Endothelial cell of umbilical vein (primary cell): ENCODE measurements at regions of chr16 and their contacts with region 1.

Region 1: DNA sequence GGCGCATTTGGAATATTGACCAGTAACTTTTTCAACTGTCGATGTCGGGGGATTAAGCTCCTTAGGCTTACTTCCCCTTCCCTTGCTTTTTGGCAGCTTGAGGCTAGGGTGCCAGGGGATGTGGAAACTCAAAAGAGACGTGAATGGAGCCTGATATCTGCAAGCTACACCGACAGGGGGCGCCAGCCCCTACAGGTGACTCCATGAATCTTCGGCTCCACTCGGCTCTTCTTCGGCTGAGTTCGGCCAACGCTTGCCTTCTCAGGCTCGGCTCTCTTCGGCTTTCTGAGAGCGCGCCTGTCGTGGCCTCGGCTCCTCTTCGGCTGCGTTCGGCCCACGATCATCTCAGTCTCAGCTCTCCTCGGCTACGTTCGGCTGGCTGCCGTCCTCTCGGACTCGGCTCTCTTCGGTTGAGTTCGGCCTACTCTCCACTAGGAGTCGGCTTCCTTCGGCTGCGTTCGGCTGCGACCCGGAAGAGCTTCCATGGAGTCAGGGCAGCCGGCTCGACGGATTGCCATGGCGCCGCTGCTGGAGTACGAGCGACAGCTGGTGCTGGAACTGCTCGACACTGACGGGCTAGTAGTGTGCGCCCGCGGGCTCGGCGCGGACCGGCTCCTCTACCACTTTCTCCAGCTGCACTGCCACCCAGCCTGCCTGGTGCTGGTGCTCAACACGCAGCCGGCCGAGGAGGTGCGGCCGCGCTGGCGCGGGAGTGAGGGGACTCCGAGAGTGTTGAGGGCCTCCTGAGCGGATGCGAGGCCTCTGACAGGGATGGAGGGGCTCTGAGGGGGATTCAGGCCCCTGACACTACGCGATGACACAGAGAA is at the start of gene ERCC4:
- DNase-seq: peak; percentile 100
- H3K4me3 ChIP-seq: peak within 1 kb of the TSS; percentile 66 to 83 (median 67)
- H3K27ac ChIP-seq: peak within 1 kb of the TSS; percentile 37
- H3K4me1 ChIP-seq: peaks cover 10% of the 10 kb centered on the region
- H3K27me3 ChIP-seq: peaks cover 3% of the 10 kb centered on the region in 2 experiments
- CTCF ChIP-seq: peak; percentile 97
- POLR2A ChIP-seq: peak; percentile 83
- total RNA-seq, gene ERCC4: 15.1 and 17.1 TPM in 2 replicates

Region 2: GRCh38 chr16:13866073-13866472 is 53.8 kb before region 1 on chr16:
- CTCF ChIA-PET with region 1: interaction called, 24 read pairs
- POLR2A ChIA-PET with region 1: no interaction called
- dilution Hi-C with region 1: no loop called
- intact Hi-C with region 1: loop called (anchors 1 kb)
- DNase-seq: peak; percentile 73
- H3K4me3 ChIP-seq: no peak overlapping the region
- H3K27ac ChIP-seq: no peak overlapping the region
- H3K4me1 ChIP-seq: no peaks in the 10 kb centered on the region
- H3K27me3 ChIP-seq: peaks cover 0 to 2% of the 10 kb centered on the region in 2 experiments
- CTCF ChIP-seq: peak; percentile 65 to 81
- POLR2A ChIP-seq: no peak

Region 3: GRCh38 chr16:14070877-14071575 is 151.1 kb after region 1 on chr16 and contains the start of gene MRTFB:
- CTCF ChIA-PET with region 1: interaction called, 18 read pairs
- POLR2A ChIA-PET with region 1: no interaction called
- dilution Hi-C with region 1: no loop called
- intact Hi-C with region 1: loop called (anchors 5 kb)
- DNase-seq: peak; percentile 70
- H3K4me3 ChIP-seq: peak within 1 kb of the TSS; percentile 74 to 96 (median 82)
- H3K27ac ChIP-seq: peak within 1 kb of the TSS; percentile 68
- H3K4me1 ChIP-seq: peaks cover 11% of the 10 kb centered on the region
- H3K27me3 ChIP-seq: no peaks in the 10 kb centered on the region
- CTCF ChIP-seq: no peak
- POLR2A ChIP-seq: no peak
- total RNA-seq, gene MRTFB: 49.5 and 50.2 TPM in 2 replicates

Region 4: GRCh38 chr16:14196539-14196938 is 276.6 kb after region 1 on chr16:
- CTCF ChIA-PET with region 1: interaction called, 20 read pairs
- POLR2A ChIA-PET with region 1: no interaction called
- dilution Hi-C with region 1: no loop called
- intact Hi-C with region 1: no loop called
- DNase-seq: peak; percentile 73
- H3K4me3 ChIP-seq: no peak overlapping the region
- H3K27ac ChIP-seq: peak overlapping the region; percentile 48
- H3K4me1 ChIP-seq: peaks cover 18% of the 10 kb centered on the region
- H3K27me3 ChIP-seq: no peaks in the 10 kb centered on the region
- CTCF ChIP-seq: no peak
- POLR2A ChIP-seq: no peak

Region 5: DNA sequence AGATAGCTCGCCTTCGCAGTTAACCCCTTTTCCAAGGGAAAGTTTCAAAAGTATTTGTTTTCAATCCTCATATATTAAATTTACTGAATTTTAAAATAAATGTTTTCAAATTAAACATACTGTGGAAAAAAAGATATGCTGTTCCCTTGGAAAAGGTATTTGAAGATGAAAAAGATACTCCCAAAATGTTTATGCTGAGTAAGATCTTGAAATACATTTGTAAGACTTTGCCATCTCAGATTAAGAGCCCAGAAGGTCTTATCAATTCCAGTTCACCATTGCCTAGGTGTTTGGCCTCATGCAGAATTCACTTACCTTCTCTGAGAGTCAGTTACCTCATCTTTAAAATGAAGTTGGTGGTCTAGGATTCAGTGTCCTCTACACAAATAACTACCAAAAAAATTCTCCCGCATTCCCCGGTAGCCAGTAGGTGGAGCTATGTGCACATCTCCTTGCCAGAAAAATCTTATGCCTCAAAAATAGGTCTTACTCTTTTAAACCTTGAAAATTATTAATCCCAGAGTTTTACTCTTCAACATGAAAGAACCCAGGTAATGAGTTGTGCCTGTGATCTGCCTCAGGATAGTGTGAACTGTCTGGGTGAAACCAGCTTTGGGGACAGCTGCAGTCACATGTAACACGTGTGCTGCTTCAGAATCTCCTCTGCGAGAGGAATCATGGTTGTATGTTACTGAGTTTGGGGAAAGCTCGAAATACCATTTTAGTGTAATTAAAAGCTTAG is 329.6 kb after region 1 on chr16:
- CTCF ChIA-PET with region 1: interaction called, 47 read pairs
- POLR2A ChIA-PET with region 1: no interaction called
- dilution Hi-C with region 1: loop called (anchors 25 kb)
- intact Hi-C with region 1: loop called (anchors 1 kb)
- DNase-seq: peak; percentile 62
- H3K4me3 ChIP-seq: no peak overlapping the region
- H3K27ac ChIP-seq: no peak overlapping the region
- H3K4me1 ChIP-seq: no peaks in the 10 kb centered on the region
- H3K27me3 ChIP-seq: no peaks in the 10 kb centered on the region
- CTCF ChIP-seq: peak; percentile 68 to 77
- POLR2A ChIP-seq: no peak

Region 6: DNA sequence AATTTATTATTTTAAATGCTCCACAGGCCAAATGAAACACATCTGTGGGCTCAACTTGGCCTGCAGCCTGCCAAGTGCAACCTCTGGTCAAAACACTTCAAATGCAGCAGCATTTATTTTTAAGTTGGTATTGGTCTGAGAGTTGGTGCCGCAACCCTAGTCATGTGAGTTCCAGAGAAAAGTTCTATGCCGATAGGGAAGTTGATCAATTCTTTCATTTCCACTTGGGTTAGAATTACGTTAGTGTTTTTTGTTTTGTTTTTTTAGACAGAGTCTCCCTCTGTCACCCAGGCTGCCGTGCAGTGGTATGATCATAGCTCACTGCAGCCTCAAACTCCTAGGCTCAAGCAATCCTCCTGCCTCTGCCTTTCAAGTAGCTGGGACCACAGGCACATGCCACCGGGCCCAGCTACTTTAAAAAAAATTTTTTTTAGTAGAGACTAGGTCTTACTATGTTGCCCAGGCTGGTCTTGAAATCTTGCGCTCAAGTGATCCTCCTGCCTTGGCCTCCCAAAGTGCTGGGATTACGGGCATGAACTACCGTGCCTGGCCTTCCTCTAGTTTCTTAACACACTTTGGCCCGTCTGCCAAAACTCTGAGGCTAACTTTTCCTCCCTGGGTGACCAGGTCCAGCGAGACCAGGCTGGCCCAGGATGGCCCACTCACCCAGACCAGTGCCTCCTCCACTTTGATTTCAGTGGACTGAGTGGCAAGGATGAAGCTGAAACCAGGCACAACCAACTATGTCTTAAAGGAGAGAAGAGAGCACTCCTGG is 372.3 kb after region 1 on chr16:
- CTCF ChIA-PET with region 1: interaction called, 49 read pairs
- POLR2A ChIA-PET with region 1: no interaction called
- dilution Hi-C with region 1: no loop called
- intact Hi-C with region 1: no loop called
- DNase-seq: no peak
- H3K4me3 ChIP-seq: no peak overlapping the region
- H3K27ac ChIP-seq: no peak overlapping the region
- H3K4me1 ChIP-seq: no peaks in the 10 kb centered on the region
- H3K27me3 ChIP-seq: no peaks in the 10 kb centered on the region
- CTCF ChIP-seq: no peak
- POLR2A ChIP-seq: no peak